ENCODE measurements at regions of chr4 and their contacts with region 1.

Region 1: GRCh38 chr4:185039508-185040273 is 21.4 kb downstream of the HELT start:
- DNase-seq: peak in 2 of 4 donors; percentile 60 to 74
- ATAC-seq: peak; percentile 98
- H3K4me3 ChIP-seq: no peak overlapping the region
- H3K27ac ChIP-seq: no peak overlapping the region
- H3K4me1 ChIP-seq: peaks cover 0 to 3% of the 10 kb centered on the region in 2 donors
- H3K27me3 ChIP-seq: no peaks in the 10 kb centered on the region
- CTCF ChIP-seq: peak; percentile 63 to 72

Region 2: GRCh38 chr4:185134307-185134869 is 94.7 kb after region 1 on chr4:
- intact Hi-C with region 1: loop called in 1 of 2 experiments (anchors 10 kb)
- DNase-seq: peak in 2 of 4 donors; percentile 48 to 58
- ATAC-seq: peak; percentile 91
- H3K4me3 ChIP-seq: no peak overlapping the region
- H3K27ac ChIP-seq: no peak overlapping the region
- H3K4me1 ChIP-seq: no peaks in the 10 kb centered on the region
- H3K27me3 ChIP-seq: peaks cover 0 to 14% of the 10 kb centered on the region in 2 donors
- CTCF ChIP-seq: peak; percentile 64 to 72

Measured in left lung (tissue), 14 donors.